Lower leg skin (tissue), 4 donors: ENCODE measurements at regions of chr13 and their contacts with region 1.

Region 1: GRCh38 chr13:97855570-97856303 is 97.7 kb upstream of the IPO5 start:
- DNase-seq: peak; percentile 36 to 86
- H3K4me3 ChIP-seq: no peak overlapping the region
- CTCF ChIP-seq: peak in 1 of 3 donors; percentile 27
- POLR2A ChIP-seq: no peak

Region 2: DNA sequence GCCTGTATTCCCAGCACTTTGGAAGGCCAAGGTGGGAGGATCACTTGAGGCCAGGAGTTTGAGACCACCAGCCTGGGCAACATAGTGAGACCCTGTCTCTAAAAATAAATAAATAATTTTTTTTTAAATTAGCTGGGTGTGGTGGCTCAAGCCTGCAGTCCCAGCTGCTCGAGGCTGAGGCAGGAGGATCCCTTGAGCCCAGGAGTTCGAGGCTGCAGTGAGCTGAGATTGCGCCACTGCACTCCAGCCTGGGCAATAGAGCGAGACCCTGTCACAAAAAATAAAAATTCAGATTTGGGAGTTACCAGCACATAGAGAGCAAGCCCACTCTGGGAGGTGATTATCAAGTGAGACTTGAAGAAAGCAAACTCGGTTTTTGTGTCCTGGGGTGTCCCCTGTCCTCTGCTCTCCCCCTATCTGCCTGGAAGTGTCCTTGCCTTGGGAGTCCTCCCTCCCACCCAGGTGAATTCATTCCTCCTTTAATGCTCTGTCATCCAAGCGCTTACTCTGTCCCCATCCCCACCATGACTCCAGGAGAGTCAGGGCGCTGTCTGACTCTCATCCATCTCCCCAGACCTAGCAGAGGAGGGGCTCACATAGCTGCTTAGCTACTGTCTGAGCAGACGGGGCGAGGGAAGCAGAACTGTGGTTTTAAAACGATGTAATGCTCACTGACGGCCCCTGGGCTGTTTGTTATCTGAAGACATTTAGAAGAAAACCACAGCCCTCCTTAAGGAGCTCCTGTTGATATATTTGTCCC is 574.4 kb after region 1 on chr13:
- intact Hi-C with region 1: loop called (anchors 10 kb)
- DNase-seq: no peak
- H3K4me3 ChIP-seq: no peak overlapping the region
- CTCF ChIP-seq: no peak
- POLR2A ChIP-seq: no peak

Region 3: GRCh38 chr13:98842864-98843481 is 987.2 kb after region 1 on chr13:
- intact Hi-C with region 1: loop called (anchors 10 kb)
- DNase-seq: peak in 1 of 2 donors; percentile 52
- H3K4me3 ChIP-seq: no peak overlapping the region
- CTCF ChIP-seq: peak in 1 of 3 donors; percentile 51
- POLR2A ChIP-seq: no peak